Calu3 (cell line): ENCODE measurements at regions of chr6 and their contacts with region 1.

Region 1: DNA sequence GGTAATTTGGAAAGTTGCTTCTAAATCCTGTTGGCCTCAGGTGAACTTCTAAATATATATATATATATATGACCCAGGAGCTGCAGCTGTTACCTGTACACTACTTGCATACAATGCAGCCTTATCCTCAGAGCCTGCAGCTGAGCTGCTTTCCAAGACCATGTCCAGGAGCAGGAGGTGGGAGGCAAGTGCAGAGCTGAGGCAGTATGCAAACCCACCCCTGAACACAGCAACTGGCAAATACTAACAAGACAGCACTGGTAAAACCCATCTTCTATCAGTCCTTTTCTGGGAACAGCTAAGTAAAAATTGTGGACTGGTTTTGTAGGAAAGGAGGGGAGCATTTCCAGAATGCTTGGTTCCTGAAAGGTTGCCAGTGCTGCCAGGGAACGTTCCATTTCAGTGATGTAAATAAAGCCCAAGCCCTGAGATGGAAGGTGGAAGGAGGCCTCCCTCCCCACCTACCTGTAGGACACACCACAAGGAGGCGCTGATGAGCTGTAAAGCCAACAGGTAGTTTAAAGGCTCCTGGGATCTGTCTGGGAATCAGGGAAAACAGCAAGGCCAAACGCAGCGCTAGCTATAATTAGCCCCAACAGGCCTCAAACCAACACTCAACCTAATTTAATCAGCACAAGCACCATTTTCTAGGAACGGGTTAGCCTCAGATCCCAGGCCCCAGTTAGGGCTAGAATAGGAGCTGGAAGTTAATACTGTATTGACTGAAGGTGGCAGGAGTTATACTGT is 93.8 kb upstream of the MAP7 start:
- DNase-seq: peak; percentile 85
- H3K4me3 Mint-ChIP-seq: no peak overlapping the region
- H3K27ac Mint-ChIP-seq: no peak overlapping the region
- H3K4me1 Mint-ChIP-seq: peaks cover 13% of the 10 kb centered on the region
- H3K27me3 Mint-ChIP-seq: no peaks in the 10 kb centered on the region
- CTCF ChIP-seq: peak; percentile 70

Region 2: GRCh38 chr6:136593748-136594490 is 50.1 kb before region 1 on chr6:
- CTCF ChIA-PET with region 1: interaction called, 5 read pairs
- intact Hi-C with region 1: loop called (anchors 5 kb)
- DNase-seq: peak; percentile 71
- H3K4me3 Mint-ChIP-seq: peak overlapping the region; percentile 55
- H3K27ac Mint-ChIP-seq: peak overlapping the region; percentile 92
- H3K4me1 Mint-ChIP-seq: peaks cover 14% of the 10 kb centered on the region
- H3K27me3 Mint-ChIP-seq: no peaks in the 10 kb centered on the region
- CTCF ChIP-seq: no peak

Region 3: DNA sequence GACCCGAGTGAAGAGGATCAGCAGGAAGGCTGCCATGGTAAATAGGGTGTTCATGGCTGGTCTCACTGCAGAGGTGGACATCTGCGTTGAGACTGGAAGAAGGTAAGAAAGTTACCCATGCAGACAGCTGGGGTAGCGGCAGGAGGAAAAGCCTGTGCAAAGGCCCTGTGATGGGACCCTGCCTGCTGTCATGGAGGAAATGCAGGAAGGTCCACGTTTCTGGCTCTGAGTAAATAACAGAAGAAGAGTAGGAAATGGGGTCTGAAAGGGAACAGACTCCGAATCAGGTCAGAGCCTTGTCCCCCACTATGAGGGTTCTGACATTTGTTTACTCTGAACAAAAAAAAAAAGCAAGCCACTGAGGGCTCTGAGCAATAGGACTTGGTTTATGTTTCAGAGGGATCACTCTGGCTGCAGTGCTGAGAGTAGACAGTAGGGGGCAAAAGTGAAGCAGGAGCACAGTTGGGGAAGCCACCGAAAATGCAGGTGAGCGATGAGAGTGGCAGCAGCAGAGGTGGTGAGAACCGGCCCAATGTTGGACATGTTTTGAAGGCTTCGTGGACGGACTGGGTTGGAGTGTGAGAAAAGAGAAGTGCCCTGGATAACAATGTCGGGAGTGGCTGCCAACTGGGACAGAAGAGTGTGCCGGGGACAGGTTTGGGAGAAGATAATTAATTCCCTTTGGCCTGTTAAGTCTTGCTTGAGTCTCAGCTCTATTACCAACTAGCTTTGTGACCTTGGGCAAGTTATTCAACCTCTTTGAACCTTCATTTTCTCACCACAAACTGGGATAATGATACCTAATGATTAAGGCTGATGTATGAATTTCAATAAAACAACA is 35.9 kb before region 1 on chr6:
- CTCF ChIA-PET with region 1: interaction called, 5 read pairs
- intact Hi-C with region 1: loop called (anchors 5 kb)
- DNase-seq: peak; percentile 81
- H3K4me3 Mint-ChIP-seq: peak overlapping the region; percentile 42
- H3K27ac Mint-ChIP-seq: peak overlapping the region; percentile 82
- H3K4me1 Mint-ChIP-seq: peaks cover 37% of the 10 kb centered on the region
- H3K27me3 Mint-ChIP-seq: no peaks in the 10 kb centered on the region
- CTCF ChIP-seq: peak; percentile 60

Region 4: GRCh38 chr6:136927292-136927691 is 283.3 kb after region 1 on chr6:
- CTCF ChIA-PET with region 1: no interaction called
- intact Hi-C with region 1: loop called (anchors 10 kb)
- DNase-seq: peak; percentile 37
- H3K4me3 Mint-ChIP-seq: no peak overlapping the region
- H3K27ac Mint-ChIP-seq: no peak overlapping the region
- H3K4me1 Mint-ChIP-seq: no peaks in the 10 kb centered on the region
- H3K27me3 Mint-ChIP-seq: peaks cover 12% of the 10 kb centered on the region
- CTCF ChIP-seq: no peak